ENCODE measurements at regions of chr5 and their contacts with region 1.

Region 1: DNA sequence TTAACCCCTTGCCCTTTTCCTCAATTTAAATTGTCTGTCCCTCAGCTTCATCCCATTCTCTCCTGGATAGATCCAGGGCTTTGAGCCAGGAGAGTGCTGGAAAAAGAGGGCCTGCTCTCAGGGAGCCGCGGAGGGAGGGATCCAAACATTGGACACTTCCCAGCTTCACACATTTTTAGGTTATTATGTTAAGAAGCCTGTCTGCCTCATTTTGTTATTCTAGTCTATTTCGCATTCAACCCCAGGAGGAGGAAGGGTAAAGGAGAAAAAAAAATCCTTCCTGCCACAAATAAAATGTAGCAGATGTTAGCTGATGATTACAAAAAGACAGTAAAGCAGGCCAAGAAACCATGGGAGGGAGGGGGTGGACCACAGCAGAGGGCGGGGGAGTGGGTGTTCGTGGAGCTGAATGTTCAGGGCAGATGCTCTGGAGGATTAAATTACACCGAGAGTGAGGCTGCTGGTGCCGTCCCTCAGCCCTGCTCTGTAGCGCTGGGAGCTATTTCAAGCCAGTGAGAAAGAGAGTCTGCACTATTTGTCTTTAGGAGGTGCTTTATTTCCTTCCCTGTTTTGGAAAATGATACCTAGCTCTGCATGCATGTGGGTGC is 60.6 kb upstream of the ZFR start:
- DNase-seq: peak in 1 of 2 donors; percentile 28
- H3K4me3 ChIP-seq: peak overlapping the region in 1 of 3 donors; percentile 31
- H3K27ac ChIP-seq: peak overlapping the region; percentile 71 to 80
- H3K4me1 ChIP-seq: peaks cover 9 to 11% of the 10 kb centered on the region in 2 donors
- H3K27me3 ChIP-seq: no peaks in the 10 kb centered on the region
- CTCF ChIP-seq: no peak
- POLR2A ChIP-seq: no peak

Region 2: DNA sequence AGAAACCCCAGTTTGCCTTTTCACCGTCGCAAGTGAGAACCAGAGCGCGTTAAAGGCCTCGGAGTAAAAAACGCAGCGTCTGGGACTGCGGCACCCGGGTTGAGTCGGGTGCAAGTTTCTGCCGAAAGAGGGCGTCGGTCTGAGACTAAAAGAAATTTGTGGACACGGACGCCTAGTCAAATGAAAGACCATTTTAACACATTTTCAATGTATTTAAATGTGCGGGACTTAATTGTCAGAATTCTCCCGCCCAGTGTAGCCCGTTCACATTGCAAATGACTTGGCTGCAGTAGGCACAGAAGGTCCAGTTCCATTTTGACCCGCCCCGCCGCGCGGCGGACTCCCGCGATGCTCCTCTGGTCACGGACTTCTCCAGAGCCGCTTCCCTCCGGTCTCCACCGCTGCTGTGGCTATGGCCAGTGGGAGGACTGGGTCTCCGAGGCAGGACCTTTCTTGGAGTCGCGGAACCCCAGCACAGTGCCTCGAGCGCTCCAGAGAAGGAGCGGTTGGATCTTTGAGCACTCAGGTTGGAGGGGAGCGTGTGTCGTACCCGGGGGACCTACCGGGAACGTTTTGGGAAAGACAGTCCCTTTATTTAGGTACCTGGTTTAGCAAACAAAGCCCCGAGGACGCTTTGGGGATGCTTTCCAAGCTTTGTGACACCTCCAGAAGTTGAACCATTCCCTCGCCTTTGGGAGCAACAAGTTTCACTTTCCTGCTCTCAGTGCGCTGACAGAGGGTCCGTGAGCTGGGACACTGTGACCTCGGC is 204.9 kb after region 1 on chr5:
- intact Hi-C with region 1: loop called (anchors 5 kb)
- DNase-seq: no peak
- H3K4me3 ChIP-seq: peak overlapping the region; percentile 56 to 86 (median 58)
- H3K27ac ChIP-seq: peak overlapping the region in 1 of 2 donors; percentile 21
- H3K4me1 ChIP-seq: peaks cover 3 to 18% of the 10 kb centered on the region in 2 donors
- H3K27me3 ChIP-seq: peaks cover 0 to 33% of the 10 kb centered on the region in 2 donors
- CTCF ChIP-seq: peak; percentile 34 to 50 (median 40)
- POLR2A ChIP-seq: no peak

Region 3: DNA sequence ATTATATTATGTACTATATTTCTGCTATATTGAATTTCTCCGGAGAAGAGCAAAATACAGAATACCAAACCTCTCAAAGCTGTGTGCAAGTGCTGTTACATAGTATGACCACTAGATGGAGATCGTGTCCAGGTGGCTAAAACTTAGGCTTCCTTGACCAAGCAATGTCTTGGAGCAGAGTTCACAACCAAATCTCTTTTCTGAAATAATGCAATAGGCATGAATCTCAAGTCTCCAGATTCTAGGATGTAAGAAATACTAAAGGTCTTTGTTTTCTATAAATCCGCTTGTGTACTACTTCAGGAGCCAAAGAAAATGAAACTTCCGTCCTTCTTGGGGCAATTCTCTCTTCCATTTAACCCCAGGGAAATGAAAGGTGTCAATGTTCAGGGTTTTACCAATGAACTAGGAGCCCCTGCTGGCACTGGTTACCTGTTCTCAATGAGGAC is 1969.5 kb after region 1 on chr5:
- intact Hi-C with region 1: no loop called
- DNase-seq: no peak
- H3K4me3 ChIP-seq: no peak overlapping the region
- H3K27ac ChIP-seq: no peak overlapping the region
- H3K4me1 ChIP-seq: no peaks in the 10 kb centered on the region
- H3K27me3 ChIP-seq: no peaks in the 10 kb centered on the region
- CTCF ChIP-seq: peak; percentile 81 to 91 (median 87)
- POLR2A ChIP-seq: no peak